ENCODE measurements at regions of chr11 and their contacts with region 1.

Region 1: GRCh38 chr11:73393479-73394380 is 17.5 kb downstream of the RELT start:
- DNase-seq: no peak
- H3K4me3 ChIP-seq: no peak overlapping the region
- CTCF ChIP-seq: peak; percentile 86

Region 2: GRCh38 chr11:72951193-72951592 is 442.5 kb before region 1 on chr11:
- CTCF ChIA-PET with region 1: no interaction called
- POLR2A ChIA-PET with region 1: no interaction called
- DNase-seq: no peak
- H3K4me3 ChIP-seq: no peak overlapping the region
- CTCF ChIP-seq: no peak

Region 3: DNA sequence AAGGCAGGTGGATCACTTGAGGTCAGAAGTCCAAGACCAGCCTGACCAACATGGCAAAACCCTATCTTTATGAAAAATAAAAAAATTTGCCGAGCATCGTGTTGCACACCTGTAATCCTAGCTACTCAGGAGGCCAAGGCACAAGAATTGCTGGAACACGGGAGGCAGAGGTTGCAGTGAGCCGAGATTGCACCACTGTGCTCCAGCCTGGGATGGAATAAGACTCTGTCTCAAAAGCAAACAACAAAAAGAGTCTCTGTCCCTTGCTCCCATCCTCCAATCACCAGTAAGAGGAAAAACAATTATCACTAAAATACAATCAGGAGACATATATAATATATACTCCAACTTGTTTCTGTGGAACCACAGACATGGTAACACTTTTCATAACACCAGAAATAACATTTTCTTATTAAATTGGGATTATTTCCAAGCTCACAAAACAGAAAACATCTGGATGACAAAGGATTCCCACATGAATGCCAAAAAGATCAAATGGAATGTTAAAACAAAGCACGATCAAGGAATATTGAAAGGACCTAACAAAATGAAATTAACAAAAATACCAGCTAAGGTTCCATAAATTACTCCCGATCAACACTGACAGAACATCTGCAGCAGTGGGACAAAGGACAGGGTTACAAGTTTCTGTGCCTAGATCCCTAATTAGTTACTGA is 266.8 kb before region 1 on chr11:
- CTCF ChIA-PET with region 1: no interaction called
- POLR2A ChIA-PET with region 1: no interaction called
- DNase-seq: no peak
- H3K4me3 ChIP-seq: no peak overlapping the region
- CTCF ChIP-seq: no peak

Region 4: DNA sequence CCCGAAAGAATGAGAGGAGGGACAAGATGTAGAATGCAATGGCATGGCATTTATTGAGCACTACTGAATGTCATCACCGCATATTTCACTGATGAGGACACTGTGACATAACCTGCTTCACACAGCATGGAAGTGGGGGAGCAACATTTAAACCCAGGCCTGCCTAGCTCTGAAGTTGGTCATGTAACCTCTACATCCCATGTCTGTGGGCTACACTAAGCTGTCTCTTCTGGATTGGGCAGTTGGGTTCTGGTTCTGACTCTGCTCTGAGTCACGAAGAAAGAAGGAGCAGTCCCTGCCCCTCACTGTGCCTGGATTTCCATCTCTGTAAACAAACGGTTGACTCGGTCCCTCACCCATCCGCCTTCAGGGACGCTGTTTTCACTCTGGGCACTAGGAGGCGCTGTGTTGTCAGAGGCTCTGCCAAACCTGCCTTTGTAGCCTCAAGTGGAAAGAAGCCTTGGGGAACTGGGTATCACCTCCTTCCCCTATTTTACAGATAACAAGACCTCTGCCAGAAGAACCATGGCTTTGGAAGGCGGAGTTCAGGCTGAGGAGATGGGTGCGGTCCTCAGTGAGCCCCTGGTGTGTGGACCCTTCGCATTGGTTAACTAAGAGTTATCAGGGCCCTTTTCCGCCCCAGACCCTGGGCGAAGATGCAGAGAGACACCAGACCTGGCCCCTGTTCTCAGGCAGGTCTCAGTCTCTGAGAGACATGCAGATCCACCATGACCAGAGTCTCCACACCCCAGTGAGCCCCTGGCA is 98.3 kb before region 1 on chr11:
- CTCF ChIA-PET with region 1: interaction called, 79 read pairs
- POLR2A ChIA-PET with region 1: no interaction called
- DNase-seq: no peak
- H3K4me3 ChIP-seq: no peak overlapping the region
- CTCF ChIP-seq: peak; percentile 94

Region 5: GRCh38 chr11:73335204-73335923 is 58.4 kb before region 1 on chr11:
- CTCF ChIA-PET with region 1: interaction called, 10 read pairs
- POLR2A ChIA-PET with region 1: no interaction called
- DNase-seq: no peak
- H3K4me3 ChIP-seq: no peak overlapping the region
- CTCF ChIP-seq: peak; percentile 91

Region 6: DNA sequence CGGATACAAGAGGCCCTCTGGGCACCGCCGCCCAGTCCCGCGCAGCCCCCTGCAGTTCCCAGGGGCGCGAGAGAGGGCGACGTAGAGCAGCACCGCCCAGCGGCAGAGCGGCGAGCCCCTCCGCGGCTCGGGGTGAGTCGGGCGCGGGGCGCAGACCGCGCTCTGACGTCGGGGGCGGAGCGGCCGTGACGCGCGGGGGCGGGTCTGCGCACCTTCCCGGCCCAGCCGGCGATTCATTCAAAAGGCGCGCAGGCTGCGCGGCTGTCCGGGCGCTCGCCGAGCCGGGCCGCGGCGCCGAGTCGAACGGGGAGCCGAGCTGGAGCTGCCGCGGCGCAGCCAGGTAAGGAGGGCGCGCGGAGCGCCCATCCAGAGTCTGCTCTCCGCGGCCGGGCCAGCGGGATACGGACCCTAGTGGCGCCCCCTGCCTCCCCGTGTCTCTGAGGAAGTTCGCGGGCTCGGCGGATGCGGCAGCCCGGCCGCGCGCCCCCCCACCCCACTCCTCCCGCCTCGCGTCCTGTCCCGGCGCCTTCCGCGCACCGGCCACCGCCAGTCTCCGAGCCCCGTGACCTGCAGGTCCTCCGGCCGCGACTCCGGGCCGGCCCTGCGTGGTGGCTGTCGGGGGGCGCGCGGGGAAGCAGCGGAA is 17.4 kb before region 1 on chr11 and contains the start of gene RELT:
- CTCF ChIA-PET with region 1: interaction called, 24 read pairs
- POLR2A ChIA-PET with region 1: interaction called, 3 read pairs
- DNase-seq: no peak
- H3K4me3 ChIP-seq: peak within 1 kb of the TSS; percentile 79
- CTCF ChIP-seq: peak; percentile 89

Region 7: GRCh38 chr11:73404048-73404447 is 10.3 kb after region 1 on chr11:
- CTCF ChIA-PET with region 1: interaction called, 47 read pairs
- POLR2A ChIA-PET with region 1: no interaction called
- DNase-seq: no peak
- H3K4me3 ChIP-seq: no peak overlapping the region
- CTCF ChIP-seq: peak; percentile 80